ENCODE measurements at regions of chr1 and their contacts with region 1.

Region 1: GRCh38 chr1:234610348-234611152 is 572 bp upstream of the IRF2BP2 start:
- DNase-seq: peak; percentile 91
- H3K4me3 Mint-ChIP-seq: peak overlapping the region; percentile 84
- H3K27ac Mint-ChIP-seq: peak overlapping the region; percentile 96
- H3K4me1 Mint-ChIP-seq: peaks cover 33% of the 10 kb centered on the region
- H3K27me3 Mint-ChIP-seq: no peaks in the 10 kb centered on the region

Region 2: GRCh38 chr1:234599617-234600417 is 10.7 kb before region 1 on chr1:
- CTCF ChIA-PET with region 1: interaction called, 7 read pairs
- intact Hi-C with region 1: loop called (anchors 1 kb)
- DNase-seq: peak; percentile 74
- H3K4me3 Mint-ChIP-seq: peak overlapping the region; percentile 83
- H3K27ac Mint-ChIP-seq: peak overlapping the region; percentile 99
- H3K4me1 Mint-ChIP-seq: peaks cover 50% of the 10 kb centered on the region
- H3K27me3 Mint-ChIP-seq: no peaks in the 10 kb centered on the region

Region 3: DNA sequence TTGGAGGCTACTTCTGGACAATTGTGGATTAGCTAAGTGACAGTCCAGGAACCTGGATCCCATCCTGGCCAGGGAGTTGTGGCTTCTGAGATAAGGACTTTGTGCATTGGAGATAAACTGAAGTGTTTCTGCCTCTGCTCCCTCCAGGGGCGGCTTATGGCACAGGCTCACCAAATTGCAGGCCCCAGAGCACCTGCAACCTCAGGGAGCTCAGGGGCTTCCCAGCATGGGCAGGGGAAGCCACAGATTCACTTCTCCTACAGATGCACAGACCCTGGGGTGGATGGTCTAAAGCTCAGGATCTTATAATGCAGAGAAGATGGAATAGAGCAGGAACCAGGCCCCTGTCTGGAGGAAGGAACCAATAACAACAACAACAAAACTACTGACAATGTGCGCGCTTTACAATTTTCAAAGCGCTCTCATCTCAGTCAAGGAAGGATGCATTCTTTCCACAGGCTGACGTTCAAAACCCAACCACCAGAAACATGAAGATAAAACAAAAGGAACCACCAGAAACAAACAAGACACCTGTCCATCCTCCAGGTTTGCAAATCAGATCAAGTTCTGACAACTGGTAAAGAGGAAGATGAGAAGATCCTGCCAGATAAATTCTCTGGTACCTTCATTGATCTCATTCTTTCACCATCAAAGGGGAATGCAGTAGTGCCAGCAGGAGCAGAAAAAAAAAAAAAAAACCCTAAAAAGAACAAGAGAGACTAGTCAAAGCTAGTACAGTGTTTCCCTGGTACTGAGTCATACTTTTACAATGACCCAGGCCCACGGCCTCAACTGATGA is 120.4 kb after region 1 on chr1:
- CTCF ChIA-PET with region 1: interaction called, 4 read pairs
- intact Hi-C with region 1: loop called (anchors 1 kb)
- DNase-seq: peak; percentile 83
- H3K4me3 Mint-ChIP-seq: peak overlapping the region; percentile 25
- H3K27ac Mint-ChIP-seq: peak overlapping the region; percentile 89
- H3K4me1 Mint-ChIP-seq: peaks cover 51% of the 10 kb centered on the region
- H3K27me3 Mint-ChIP-seq: no peaks in the 10 kb centered on the region

Region 4: GRCh38 chr1:234925440-234926263 is 315.1 kb after region 1 on chr1:
- CTCF ChIA-PET with region 1: interaction called, 7 read pairs
- intact Hi-C with region 1: loop called (anchors 1 kb)
- DNase-seq: peak; percentile 40
- H3K4me3 Mint-ChIP-seq: peak overlapping the region; percentile 39
- H3K27ac Mint-ChIP-seq: peak overlapping the region; percentile 75
- H3K4me1 Mint-ChIP-seq: peaks cover 50% of the 10 kb centered on the region
- H3K27me3 Mint-ChIP-seq: no peaks in the 10 kb centered on the region

Region 5: DNA sequence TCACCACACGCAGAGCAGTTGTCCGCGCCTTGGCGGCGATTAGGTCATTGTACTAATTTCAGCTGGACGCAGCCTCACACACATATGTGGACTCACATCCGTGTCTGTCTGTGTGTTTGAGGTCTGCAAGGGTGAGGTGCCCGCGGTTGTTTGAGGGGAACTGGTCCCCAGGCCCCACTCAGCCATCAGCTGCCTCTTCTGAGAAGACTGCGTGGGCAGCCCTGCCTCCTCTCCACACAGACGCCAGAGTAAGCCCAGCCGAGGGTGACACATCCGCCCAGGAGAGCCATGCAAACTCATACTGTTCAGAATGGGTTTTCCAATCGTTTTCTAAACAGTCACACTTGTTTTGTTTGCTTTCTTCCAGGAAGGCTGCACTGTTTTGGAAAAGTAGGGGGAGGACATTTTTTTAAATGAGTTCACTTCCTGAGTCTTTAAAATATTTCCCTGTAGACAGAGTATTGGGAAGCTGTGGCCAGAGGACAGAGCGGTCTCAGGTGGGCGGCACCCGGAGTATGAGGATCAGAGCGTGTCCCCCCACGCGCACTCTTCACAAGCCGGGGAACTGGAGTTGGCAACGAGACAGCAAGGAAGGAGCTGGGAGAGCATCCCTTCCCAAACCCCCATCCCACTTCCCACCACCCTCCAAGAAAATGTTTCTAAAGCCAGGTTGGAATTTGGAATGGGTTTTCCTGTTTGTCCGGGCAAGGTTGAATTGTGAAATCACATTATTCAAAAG is 464.8 kb after region 1 on chr1:
- CTCF ChIA-PET with region 1: no interaction called
- intact Hi-C with region 1: loop called (anchors 1 kb)
- DNase-seq: peak; percentile 83
- H3K4me3 Mint-ChIP-seq: peak overlapping the region; percentile 0
- H3K27ac Mint-ChIP-seq: peak overlapping the region; percentile 90
- H3K4me1 Mint-ChIP-seq: peaks cover 36% of the 10 kb centered on the region
- H3K27me3 Mint-ChIP-seq: no peaks in the 10 kb centered on the region